Dorsolateral prefrontal cortex (tissue), 120 donors: ENCODE measurements at regions of chr3 and their contacts with region 1.

Region 1: DNA sequence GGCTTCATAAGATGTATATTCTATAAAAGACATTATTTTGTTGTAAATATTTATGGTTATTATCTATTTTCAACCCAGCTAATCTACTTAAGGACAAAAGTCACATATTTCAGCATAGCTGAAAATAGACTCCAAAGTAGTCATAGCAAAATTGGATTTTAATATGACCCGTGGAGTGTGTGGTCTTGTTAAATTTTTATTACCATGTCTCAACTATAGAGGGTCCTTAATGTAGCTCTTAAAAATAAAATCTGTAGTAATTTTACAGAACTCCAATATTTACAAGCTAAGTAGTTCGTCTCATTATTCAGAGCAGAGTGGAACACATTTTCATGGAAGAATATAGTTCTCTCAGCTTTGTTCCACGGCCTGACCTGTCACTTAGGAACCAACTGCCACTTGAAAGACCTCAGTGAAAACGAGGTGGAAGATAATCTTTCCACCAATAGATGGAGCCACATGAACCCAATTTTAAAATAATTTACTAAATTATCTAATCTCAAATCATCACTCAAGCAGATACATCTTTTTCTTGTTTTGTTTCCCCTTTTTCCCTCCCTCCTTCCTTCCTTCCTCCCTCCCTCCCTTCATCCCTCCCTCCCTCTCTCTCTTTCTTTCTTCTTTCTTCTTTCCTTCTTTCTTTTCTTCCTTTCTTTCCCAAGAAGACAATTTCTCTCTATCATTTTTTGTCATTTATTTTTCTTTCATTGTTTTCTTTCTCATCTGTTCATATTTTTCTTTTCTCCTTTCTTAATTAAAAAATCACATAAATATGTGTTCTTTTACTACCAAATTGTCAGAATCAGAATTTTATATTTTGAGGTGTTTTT is 97.2 kb downstream of the CLDN1 start:
- DNase-seq: no peak
- H3K4me3 ChIP-seq: no peak overlapping the region
- H3K27ac ChIP-seq: no peak overlapping the region
- H3K27me3 ChIP-seq: peaks cover 0 to 3% (median 0%) of the 10 kb centered on the region in 45 donors
- CTCF ChIP-seq: peak; percentile 18 to 75 (median 57)

Region 2: DNA sequence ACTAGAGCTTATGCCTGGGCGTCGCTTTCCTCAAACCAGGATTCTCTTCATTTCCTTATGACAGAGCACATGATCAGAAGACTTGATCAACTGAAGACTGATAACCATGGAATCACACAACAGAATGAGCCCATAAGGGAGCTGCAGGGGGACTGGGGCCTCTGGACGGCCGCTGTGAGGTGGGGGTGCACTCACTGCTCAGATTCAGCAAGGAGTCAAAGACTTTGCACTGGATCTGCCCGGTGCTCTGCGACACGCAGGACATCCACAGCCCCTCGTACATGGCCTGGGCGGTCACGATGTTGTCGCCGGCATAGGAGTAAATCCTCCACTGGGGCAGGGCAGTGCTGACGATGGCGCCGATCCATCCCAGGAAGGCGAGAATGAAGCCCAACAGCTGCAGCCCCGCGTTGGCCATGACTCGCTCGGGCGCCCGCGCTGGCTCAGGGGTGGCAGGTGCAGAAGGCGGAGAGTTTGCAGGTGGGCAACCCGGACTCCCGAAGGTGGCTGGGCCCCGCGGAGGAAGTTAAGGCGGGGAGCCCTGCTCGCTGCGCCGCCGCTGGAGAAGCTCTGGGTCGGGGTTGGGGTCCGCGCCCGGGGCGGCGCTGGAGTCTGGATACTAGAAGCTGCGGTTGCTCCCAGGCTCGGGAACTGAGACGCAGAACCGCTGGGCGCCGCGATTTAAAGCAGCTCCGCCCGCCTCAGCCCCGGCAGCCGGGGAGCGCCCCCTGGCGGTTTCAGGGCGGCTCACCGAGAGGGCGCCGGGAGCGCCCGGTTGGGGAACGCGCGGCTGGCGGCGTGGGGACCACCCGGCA is 96.9 kb after region 1 on chr3 and contains the start of gene CLDN1:
- intact Hi-C with region 1: loop called (anchors 5 kb)
- DNase-seq: peak; percentile 18 to 87 (median 68)
- H3K4me3 ChIP-seq: peak within 1 kb of the TSS; percentile 44 to 83 (median 69)
- H3K27ac ChIP-seq: peak within 1 kb of the TSS in 3 of 59 donors; percentile 54 to 71 (median 55)
- H3K27me3 ChIP-seq: peaks cover 0 to 6% (median 0%) of the 10 kb centered on the region in 45 donors
- CTCF ChIP-seq: peak; percentile 76 to 99 (median 94)
- total RNA-seq, gene CLDN1: 0.28 to 3.3 (median 0.90) TPM in 118 of 120 experiments, not detected in the others